OCI-LY7 (cell line): ENCODE measurements at regions of chr3 and their contacts with region 1.

Region 1: GRCh38 chr3:108124337-108125152 is 33.7 kb upstream of the CD47 start:
- DNase-seq: peak; percentile 94
- H3K4me3 ChIP-seq: peak overlapping the region; percentile 81
- H3K27ac ChIP-seq: peak overlapping the region; percentile 95
- H3K4me1 ChIP-seq: peaks cover 62% of the 10 kb centered on the region
- CTCF ChIP-seq: 0 out of 2 replicates have a peak, but pooled peaks have one; percentile 1

Region 2: DNA sequence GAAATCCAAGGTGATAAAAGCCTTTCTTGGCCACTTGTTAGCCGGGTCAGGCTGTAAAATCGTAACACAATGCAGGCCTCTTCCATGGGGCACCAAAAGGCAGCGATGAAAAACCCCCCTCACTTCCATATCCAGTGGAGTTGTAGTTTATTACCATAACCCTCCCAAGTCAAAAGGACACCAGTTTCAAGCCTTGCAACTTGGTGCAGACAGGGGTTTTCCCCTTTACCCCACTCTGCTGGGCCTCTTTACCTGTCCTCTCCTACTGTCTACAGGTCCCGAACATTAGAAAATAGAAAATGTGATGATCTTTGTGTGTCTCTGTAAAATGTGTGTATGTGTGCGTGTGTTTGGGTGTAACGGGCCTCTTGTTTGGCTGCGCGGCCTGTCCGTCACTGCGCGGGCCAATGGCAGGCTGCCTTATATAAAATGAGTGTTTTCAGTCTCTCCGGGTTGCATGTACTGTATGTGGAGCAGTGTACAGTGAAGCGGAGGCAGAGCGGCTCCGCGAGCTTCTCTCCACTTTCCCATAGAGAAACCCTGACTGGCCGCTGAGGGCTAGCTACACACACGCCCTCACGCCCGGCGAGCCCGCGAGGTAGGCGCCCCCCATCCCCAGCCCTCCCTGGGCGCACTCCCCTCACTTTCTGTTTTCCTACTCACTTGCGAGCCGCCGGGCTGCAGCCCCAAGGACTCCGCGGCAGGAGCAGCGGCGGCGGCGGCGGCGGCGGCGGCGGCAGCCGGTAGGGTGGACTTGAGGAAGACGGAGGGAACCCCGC is 601.8 kb before region 1 on chr3 and contains the start of gene BBX:
- CTCF ChIA-PET with region 1: no interaction called
- POLR2A ChIA-PET with region 1: interaction called, 6 read pairs
- intact Hi-C with region 1: loop called (anchors 10 kb)
- DNase-seq: peak; percentile 92
- H3K4me3 ChIP-seq: peak within 1 kb of the TSS; percentile 89
- H3K27ac ChIP-seq: peak within 1 kb of the TSS; percentile 82
- H3K4me1 ChIP-seq: peaks cover 40% of the 10 kb centered on the region
- CTCF ChIP-seq: no peak
- total RNA-seq, gene BBX: 20.2 and 27.0 TPM in 2 replicates

Region 3: GRCh38 chr3:108090701-108091451 is 33.7 kb before region 1 on chr3 and contains the start of gene CD47:
- CTCF ChIA-PET with region 1: interaction called, 3 read pairs
- POLR2A ChIA-PET with region 1: interaction called, 24 read pairs
- intact Hi-C with region 1: loop called (anchors 1 kb)
- DNase-seq: peak; percentile 90
- H3K4me3 ChIP-seq: peak within 1 kb of the TSS; percentile 98
- H3K27ac ChIP-seq: peak within 1 kb of the TSS; percentile 78
- H3K4me1 ChIP-seq: peaks cover 35% of the 10 kb centered on the region
- CTCF ChIP-seq: 0 out of 2 replicates have a peak, but pooled peaks have one; percentile 5
- total RNA-seq, gene CD47: 40.8 and 43.9 TPM in 2 replicates

Region 4: DNA sequence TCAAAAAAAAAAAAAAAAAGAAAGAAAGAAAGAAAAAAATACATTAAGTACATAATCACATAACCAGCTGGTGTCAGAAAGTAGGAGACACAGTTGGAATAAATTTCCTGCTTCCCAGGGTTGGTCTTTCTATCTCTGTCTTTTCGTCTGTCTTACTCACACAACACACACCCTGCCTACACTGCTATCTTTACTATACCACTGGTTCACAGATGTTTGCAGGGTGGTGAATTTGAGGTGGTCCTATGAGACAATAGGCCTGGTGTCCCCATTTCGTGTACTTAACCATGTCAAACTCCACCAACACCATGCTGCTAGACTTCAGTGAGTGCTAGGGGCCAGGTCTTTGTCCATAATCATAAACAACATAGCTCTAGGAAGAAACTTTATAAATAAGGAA is 16.1 kb before region 1 on chr3:
- CTCF ChIA-PET with region 1: no interaction called
- POLR2A ChIA-PET with region 1: interaction called, 13 read pairs
- intact Hi-C with region 1: no loop called
- DNase-seq: no peak
- H3K4me3 ChIP-seq: no peak overlapping the region
- H3K27ac ChIP-seq: no peak overlapping the region
- H3K4me1 ChIP-seq: no peaks in the 10 kb centered on the region
- CTCF ChIP-seq: no peak

Region 5: DNA sequence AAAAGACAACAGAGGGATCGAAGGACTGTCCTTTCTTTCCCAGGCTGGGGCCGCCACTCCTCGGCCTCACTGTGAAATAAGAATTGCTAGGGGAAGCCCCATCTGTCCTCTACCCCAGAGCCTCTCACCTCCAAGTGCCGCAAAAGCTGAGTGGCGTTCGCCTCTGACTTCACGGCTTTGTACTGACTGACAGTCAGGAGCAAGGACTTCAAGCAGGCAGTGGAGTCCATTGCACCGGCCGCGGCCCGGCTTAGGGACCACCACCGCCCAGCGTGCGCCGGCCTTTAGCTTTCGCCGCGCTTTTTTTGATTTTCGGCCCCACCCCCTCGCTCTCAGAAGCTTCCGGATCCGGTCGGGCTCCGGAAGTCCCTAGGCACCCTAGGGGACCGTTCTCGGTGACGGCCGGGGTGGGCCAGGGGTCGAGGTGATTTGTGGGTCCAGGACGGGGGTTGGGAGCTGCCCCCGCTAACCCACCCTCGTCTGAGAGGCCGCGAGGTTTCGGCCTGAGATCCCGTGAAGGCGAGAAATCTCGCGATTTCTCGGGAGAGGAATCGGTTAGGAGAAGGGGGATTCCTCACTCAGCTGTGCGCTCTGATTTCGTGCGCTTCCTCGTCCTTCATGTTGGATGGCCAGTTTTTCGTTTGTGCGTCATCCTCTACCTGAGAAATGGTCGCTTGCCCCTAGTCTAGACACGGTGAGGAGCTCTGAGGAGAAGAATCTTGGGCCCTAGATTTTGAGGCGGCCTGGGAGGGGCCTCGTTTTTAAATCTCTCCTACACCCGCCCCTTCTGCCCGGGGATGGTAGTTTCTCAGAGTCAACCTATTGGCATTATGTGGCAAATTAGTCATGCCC is 464.8 kb after region 1 on chr3 and contains the starts of genes CIP2A and DZIP3:
- CTCF ChIA-PET with region 1: no interaction called
- POLR2A ChIA-PET with region 1: interaction called, 5 read pairs
- intact Hi-C with region 1: loop called (anchors 2 kb)
- DNase-seq: peak; percentile 97
- H3K4me3 ChIP-seq: peak within 1 kb of the TSS; percentile 93
- H3K27ac ChIP-seq: peak within 1 kb of the TSS; percentile 87
- H3K4me1 ChIP-seq: peaks cover 40% of the 10 kb centered on the region
- CTCF ChIP-seq: no peak
- total RNA-seq, gene CIP2A: 71.9 and 74.1 TPM in 2 replicates
- total RNA-seq, gene DZIP3: 14.5 and 16.6 TPM in 2 replicates